ENCODE measurements at regions of chr9 and their contacts with region 1.

Region 1: DNA sequence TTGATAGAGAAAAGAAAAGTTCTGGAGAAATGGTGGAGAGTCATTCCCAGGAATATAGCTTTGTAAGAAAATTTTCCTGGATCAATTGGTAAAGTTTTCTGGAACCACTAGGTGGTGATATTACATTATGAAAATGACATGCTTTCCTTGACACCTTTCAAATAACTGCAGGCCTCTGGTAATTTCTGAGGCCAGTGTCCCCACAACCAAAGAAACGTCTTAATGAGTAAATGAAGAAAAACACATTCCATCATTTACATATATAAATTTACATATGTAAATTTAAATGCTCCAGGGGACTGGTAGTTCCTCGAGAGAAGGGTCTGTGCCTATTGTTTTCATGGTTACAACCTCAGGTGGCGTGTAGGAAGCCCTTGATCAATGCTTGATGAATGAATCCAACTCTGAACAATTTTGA is 17.2 kb upstream of the RGS3 start:
- DNase-seq: no peak
- H3K4me3 ChIP-seq: no peak overlapping the region
- H3K27ac ChIP-seq: peak overlapping the region in 2 of 8 donors; percentile 13 to 15
- H3K4me1 ChIP-seq: peaks cover 0 to 14% (median 6%) of the 10 kb centered on the region in 6 donors
- H3K27me3 ChIP-seq: no peaks in the 10 kb centered on the region
- CTCF ChIP-seq: peak; percentile 30 to 75 (median 68)
- POLR2A ChIP-seq: no peak

Region 2: DNA sequence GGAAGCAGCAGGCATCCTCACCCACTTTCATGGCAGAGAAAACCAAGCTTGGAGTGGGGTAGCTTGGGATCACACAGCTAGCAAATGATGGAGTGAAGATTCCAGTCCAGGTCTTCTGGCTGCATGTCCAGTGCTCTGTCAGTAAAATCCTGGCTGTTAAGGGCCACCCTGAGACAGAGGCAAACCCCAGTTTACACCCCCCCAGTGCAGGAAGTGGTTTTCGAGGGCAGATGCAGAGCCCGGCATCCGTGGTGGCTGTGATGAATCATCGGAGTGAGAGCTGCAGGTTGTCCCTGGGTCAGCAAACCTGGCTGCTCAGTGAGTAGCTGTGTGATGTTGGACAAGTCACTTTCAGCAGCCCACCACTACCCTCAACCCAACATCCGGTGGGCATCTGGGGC is 132.6 kb after region 1 on chr9:
- intact Hi-C with region 1: no loop called
- DNase-seq: peak; percentile 96
- H3K4me3 ChIP-seq: peak overlapping the region in 1 of 8 donors; percentile 69
- H3K27ac ChIP-seq: peak overlapping the region; percentile 77 to 96 (median 92)
- H3K4me1 ChIP-seq: peaks cover 61 to 100% (median 91%) of the 10 kb centered on the region in 6 donors
- H3K27me3 ChIP-seq: no peaks in the 10 kb centered on the region
- CTCF ChIP-seq: no peak
- POLR2A ChIP-seq: no peak

Region 3: DNA sequence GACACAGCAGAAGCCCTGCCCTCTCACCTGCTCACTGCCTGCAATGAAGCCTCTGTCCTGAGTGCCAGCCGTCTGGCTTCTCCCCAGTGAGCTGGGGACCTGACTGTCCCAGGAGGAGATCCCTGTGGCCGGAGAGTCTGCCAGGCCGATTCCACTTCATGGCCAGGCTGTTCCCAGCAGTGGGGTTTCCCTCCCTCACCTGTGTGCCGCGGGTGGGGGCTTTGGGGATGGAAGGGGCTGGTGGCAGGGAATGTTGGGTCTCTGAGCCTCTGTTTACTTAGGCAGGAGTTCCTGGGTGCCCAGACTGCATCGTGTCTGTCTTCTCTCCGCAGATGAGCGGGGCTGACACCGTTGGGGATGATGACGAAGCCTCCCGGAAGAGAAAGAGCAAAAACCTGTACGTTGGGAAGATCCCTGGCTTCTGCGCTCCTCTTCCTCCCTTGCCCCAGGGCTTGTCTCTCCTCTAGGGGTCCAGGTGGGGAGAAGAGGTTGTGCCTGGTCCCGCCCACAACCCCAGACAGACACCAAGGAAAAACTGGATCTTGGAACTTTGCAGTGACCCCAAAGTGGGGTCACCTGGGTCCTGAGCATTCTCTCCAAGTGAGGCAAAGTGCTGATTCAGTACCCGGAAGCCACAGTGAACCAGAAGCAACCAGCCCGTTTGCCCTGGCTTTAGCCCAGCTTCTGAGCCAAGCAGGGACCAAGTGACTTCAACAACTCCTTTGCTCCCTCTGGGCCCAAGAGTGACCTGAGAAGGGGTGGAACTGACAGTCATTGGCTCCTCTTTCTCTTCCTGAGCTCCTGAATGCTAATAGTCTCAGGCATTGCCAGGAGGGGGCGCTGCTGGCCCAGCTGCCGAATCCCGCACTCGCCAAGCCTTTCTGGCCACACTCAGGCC is 144.9 kb after region 1 on chr9:
- intact Hi-C with region 1: loop called (anchors 5 kb)
- DNase-seq: peak; percentile 90
- H3K4me3 ChIP-seq: no peak overlapping the region
- H3K27ac ChIP-seq: peak overlapping the region in 5 of 8 donors; percentile 16 to 88 (median 81)
- H3K4me1 ChIP-seq: peaks cover 62 to 100% (median 88%) of the 10 kb centered on the region in 6 donors
- H3K27me3 ChIP-seq: no peaks in the 10 kb centered on the region
- CTCF ChIP-seq: peak; percentile 66 to 90 (median 83)
- POLR2A ChIP-seq: no peak

Region 4: GRCh38 chr9:113657703-113658544 is 211.6 kb after region 1 on chr9:
- intact Hi-C with region 1: loop called (anchors 2 kb)
- DNase-seq: peak; percentile 92
- H3K4me3 ChIP-seq: no peak overlapping the region
- H3K27ac ChIP-seq: no peak overlapping the region
- H3K4me1 ChIP-seq: peaks cover 10 to 47% (median 32%) of the 10 kb centered on the region in 6 donors
- H3K27me3 ChIP-seq: peaks cover 0 to 24% (median 0%) of the 10 kb centered on the region in 7 donors
- CTCF ChIP-seq: peak; percentile 92 to 97 (median 95)
- POLR2A ChIP-seq: no peak